IMR-90 (cell line): ENCODE measurements at regions of chr2 and their contacts with region 1.

Region 1: DNA sequence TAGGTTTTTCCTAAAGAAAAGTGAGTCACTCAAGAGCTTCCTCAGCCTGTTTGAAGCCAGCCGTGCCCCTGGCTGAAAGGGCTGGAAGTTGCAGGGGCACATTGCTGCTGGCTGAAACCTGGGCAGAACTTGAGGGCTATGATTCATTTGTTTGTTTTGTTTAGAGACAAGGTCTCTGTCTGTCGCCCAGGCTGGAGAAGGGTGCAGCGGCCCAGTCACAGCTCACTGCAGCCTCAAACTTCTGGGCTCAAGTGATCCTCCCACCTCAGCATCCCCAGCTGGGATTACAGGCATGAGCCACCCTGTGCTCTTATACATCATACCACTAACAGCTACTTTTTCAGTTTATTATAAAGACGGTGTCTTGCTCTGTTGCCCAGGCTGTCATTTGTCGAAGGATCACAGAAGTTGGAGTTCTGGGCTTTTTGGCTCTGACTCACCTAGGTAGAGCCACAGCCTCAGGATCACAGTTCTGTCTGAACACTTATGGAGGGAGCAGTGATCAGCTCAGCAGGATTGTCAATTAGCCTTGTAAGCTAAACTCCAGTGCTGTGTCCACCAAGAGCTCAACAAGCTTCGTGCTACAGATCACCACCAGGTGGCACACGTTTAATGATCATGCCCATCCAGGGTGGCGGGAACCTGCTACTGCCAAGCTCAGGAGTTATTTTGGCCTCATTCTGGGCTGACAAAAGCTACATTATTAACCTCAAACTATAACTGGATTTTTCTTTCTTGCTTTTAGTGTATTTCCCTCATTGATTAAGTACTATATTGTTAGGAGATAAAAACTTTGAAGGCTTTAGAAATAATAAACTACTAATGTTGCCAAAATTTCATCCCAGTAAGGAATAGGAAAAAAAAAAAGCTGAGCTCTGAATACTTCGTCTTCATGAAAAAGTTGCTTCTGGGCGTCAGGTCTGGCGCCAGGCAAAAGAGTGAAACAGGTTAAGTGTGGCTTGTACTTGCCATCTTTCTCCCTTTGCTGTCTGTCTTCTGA is 57.9 kb downstream of the ARHGEF33 start:
- DNase-seq: peak; percentile 75
- ATAC-seq: peak; percentile 89
- H3K4me3 ChIP-seq: no peak overlapping the region
- H3K27ac ChIP-seq: no peak overlapping the region
- H3K4me1 ChIP-seq: 0 out of 2 replicates have a peak, but pooled peaks cover 2% of the 10 kb centered on the region
- H3K27me3 ChIP-seq: no peaks in the 10 kb centered on the region; the same call in 1 of the 2 replicates
- CTCF ChIP-seq: peak; percentile 61
- POLR2A ChIP-seq: no peak
- RAD21 ChIP-seq: peak; percentile 60

Region 2: DNA sequence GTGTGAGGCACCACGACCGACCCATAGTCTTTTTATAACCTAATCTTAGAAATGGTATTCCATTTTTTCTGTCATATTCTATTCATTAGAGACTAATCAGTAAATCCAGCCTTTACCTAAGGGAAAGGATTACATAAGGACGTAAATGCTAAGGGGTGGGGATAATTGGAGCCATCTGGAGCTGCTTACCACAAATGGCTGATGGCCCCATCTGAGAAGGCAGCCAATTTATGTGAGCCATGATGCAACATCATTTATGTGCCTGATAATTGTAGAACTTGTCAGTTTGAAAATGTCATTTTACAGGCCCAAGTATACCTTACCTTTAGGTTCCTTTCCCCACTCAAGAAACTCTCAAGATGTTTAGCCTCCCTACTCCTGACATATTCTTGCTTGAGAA is 13.9 kb before region 1 on chr2:
- CTCF ChIA-PET with region 1: interaction called, 10 read pairs
- POLR2A ChIA-PET with region 1: no interaction called
- dilution Hi-C with region 1: no loop called
- in situ Hi-C with region 1: no loop called
- intact Hi-C with region 1: no loop called
- DNase-seq: peak; percentile 86
- ATAC-seq: no peak; the same call in 1 of the 2 replicates
- H3K4me3 ChIP-seq: no peak overlapping the region
- H3K27ac ChIP-seq: no peak overlapping the region
- H3K4me1 ChIP-seq: peaks cover 4% of the 10 kb centered on the region; the same call in 1 of the 2 replicates
- H3K27me3 ChIP-seq: no peaks in the 10 kb centered on the region
- CTCF ChIP-seq: no peak
- POLR2A ChIP-seq: no peak
- RAD21 ChIP-seq: no peak

Region 3: GRCh38 chr2:38959938-38960608 is 12.5 kb after region 1 on chr2:
- CTCF ChIA-PET with region 1: interaction called, 10 read pairs
- POLR2A ChIA-PET with region 1: no interaction called
- dilution Hi-C with region 1: no loop called
- in situ Hi-C with region 1: no loop called
- intact Hi-C with region 1: no loop called
- DNase-seq: peak; percentile 85
- ATAC-seq: peak; percentile 98
- H3K4me3 ChIP-seq: peak overlapping the region; percentile 73
- H3K27ac ChIP-seq: no peak overlapping the region; the same call in 1 of the 2 replicates
- H3K4me1 ChIP-seq: no peaks in the 10 kb centered on the region; the same call in 1 of the 2 replicates
- H3K27me3 ChIP-seq: peaks cover 11% of the 10 kb centered on the region
- CTCF ChIP-seq: peak; percentile 18; the same call in 1 of the 2 replicates
- POLR2A ChIP-seq: no peak
- RAD21 ChIP-seq: no peak

Region 4: GRCh38 chr2:39127973-39128372 is 180.4 kb after region 1 on chr2:
- CTCF ChIA-PET with region 1: no interaction called
- POLR2A ChIA-PET with region 1: no interaction called
- dilution Hi-C with region 1: no loop called
- in situ Hi-C with region 1: no loop called
- intact Hi-C with region 1: no loop called
- DNase-seq: peak; percentile 37
- ATAC-seq: no peak
- H3K4me3 ChIP-seq: no peak overlapping the region
- H3K27ac ChIP-seq: no peak overlapping the region
- H3K4me1 ChIP-seq: peaks cover 3% of the 10 kb centered on the region
- H3K27me3 ChIP-seq: no peaks in the 10 kb centered on the region
- CTCF ChIP-seq: no peak
- POLR2A ChIP-seq: no peak
- RAD21 ChIP-seq: no peak

Region 5: DNA sequence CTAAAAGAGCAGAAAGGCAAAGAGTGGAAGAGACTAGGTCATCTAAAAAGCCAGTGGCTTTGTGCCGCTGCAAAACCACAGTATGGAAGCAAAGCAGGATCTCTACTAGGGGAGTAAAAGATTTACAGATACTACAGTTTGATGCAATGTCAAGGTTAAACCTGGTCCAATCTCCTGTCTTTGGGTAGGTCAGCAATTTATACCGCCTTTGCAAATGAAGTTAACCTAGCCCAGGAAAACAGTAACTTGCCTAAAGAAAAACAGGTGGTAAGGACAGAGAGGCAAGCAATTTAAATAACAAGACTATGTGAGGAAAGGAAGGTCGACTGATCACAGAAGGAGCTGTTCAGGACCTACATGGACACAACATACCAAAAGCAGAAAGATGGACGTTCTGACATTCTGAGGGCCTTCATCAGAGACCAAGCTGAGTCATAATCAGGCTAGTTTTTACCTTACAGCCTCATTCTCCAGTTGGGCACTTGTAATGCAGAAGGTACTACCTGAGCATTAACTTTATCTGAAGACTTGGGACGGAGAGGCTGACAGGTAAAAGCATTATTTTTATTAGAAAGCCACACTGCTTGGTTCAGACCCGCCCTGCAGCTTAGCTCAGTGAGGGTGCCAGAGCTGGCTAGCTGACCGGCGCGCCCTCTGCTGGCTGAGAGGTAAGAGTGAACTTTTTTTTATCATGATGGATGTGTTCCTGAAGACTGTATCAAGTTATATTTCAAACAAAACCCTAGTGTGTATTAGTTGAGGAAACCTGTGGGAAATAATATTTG is 280.3 kb after region 1 on chr2:
- CTCF ChIA-PET with region 1: interaction called, 28 read pairs
- POLR2A ChIA-PET with region 1: no interaction called
- dilution Hi-C with region 1: no loop called
- in situ Hi-C with region 1: loop called (anchors 10 kb)
- intact Hi-C with region 1: loop called (anchors 1 kb)
- DNase-seq: peak; percentile 62
- ATAC-seq: peak; percentile 77
- H3K4me3 ChIP-seq: no peak overlapping the region
- H3K27ac ChIP-seq: no peak overlapping the region
- H3K4me1 ChIP-seq: 0 out of 2 replicates have a peak, but pooled peaks cover 1% of the 10 kb centered on the region
- H3K27me3 ChIP-seq: no peaks in the 10 kb centered on the region
- CTCF ChIP-seq: peak; percentile 84
- POLR2A ChIP-seq: no peak
- RAD21 ChIP-seq: peak; percentile 77